Naive thymus-derived CD4-positive, alpha-beta T cell (primary cell): ENCODE measurements at regions of chr3 and their contacts with region 1.

Region 1: DNA sequence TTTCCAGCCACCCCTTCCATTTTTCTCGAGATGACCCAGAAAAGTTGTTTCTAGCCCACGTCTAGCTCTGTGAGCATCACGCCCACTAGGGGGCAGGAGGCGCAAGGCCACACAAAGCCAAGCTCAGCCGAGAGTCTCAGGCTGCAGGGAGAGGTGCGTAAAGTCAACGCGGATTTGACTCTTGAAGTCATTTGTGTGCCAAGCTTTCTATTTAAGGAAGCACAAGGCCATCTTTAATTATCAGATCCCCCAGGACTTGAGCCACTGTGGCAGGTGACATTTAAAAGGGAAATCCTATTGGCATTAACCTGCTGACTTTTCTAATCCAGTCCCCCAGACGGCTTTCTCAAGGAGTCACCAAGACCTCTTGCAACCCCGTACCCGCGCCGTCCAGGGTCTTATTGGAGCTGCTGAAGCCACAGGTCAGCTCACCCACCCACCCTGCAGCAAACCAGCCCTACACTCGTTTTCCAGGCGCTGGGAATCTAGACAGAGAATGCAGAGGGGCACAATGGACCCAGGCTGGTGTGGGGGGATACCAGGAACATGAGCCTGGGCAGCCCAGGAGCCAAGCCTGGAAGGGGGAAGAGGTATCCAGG is 62.1 kb downstream of the CAPN7 start:
- DNase-seq: peak; percentile 75 to 88 (median 82)
- ATAC-seq: peak; percentile 56
- H3K4me3 ChIP-seq: peak overlapping the region; percentile 4
- H3K4me3 Mint-ChIP-seq: peak overlapping the region in 9 of 10 donors; percentile 8 to 72 (median 56)
- H3K27ac ChIP-seq: no peak overlapping the region
- H3K27ac Mint-ChIP-seq: peak overlapping the region; percentile 32 to 84 (median 70)
- H3K4me1 ChIP-seq: peaks cover 54 to 69% of the 10 kb centered on the region in 2 donors
- H3K4me1 Mint-ChIP-seq: peaks cover 45 to 90% (median 73%) of the 10 kb centered on the region in 7 donors
- H3K27me3 ChIP-seq: no peaks in the 10 kb centered on the region
- H3K27me3 Mint-ChIP-seq: peaks cover 0 to 3% (median 0%) of the 10 kb centered on the region in 5 donors

Region 2: DNA sequence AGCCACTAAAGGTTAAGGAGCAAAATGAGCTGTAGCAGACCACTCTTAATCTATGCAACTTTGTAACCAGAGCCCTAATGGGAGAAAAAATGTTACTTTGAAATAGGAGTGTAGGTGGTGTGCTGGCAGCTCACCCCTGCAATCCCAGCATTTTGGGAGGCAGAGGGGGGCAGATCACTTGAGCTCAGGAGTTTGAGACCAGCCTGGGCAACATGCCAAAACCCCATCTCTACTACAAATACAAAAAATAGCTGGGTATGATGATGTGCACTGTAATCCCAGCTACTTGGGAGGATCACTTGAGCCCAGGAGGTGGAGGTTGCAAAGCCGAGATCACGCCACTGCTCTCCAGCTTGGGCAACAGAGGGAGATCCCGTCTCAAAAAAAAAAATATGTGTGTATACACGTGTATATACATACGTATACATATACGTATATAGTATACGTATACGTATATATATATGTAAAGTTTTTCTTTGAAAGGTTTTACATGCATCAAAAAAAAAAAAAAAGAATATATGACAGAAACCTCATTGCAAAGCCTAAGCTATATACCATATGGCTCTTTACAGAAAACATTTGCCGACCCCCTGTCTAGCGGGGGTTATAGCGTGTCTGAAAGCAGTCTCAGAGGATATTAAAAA is 46.4 kb before region 1 on chr3:
- CTCF ChIA-PET with region 1: no interaction called
- POLR2A ChIA-PET with region 1: no interaction called
- intact Hi-C with region 1: no loop called
- DNase-seq: no peak
- ATAC-seq: no peak
- H3K4me3 ChIP-seq: no peak overlapping the region
- H3K4me3 Mint-ChIP-seq: no peak overlapping the region
- H3K27ac ChIP-seq: no peak overlapping the region
- H3K27ac Mint-ChIP-seq: no peak overlapping the region
- H3K4me1 ChIP-seq: no peaks in the 10 kb centered on the region
- H3K4me1 Mint-ChIP-seq: peaks cover 10 to 29% (median 16%) of the 10 kb centered on the region in 7 donors
- H3K27me3 ChIP-seq: no peaks in the 10 kb centered on the region
- H3K27me3 Mint-ChIP-seq: no peaks in the 10 kb centered on the region

Region 3: GRCh38 chr3:15284121-15284889 is 16.2 kb after region 1 on chr3:
- CTCF ChIA-PET with region 1: interaction called, 12 read pairs
- POLR2A ChIA-PET with region 1: interaction called, 4 read pairs
- intact Hi-C with region 1: no loop called
- DNase-seq: no peak
- ATAC-seq: no peak
- H3K4me3 ChIP-seq: no peak overlapping the region
- H3K4me3 Mint-ChIP-seq: peak overlapping the region in 3 of 10 donors; percentile 3 to 42 (median 12)
- H3K27ac ChIP-seq: no peak overlapping the region
- H3K27ac Mint-ChIP-seq: peak overlapping the region in 4 of 9 donors; percentile 19 to 74 (median 38)
- H3K4me1 ChIP-seq: peaks cover 35 to 42% of the 10 kb centered on the region in 2 donors
- H3K4me1 Mint-ChIP-seq: peaks cover 48 to 97% (median 92%) of the 10 kb centered on the region in 7 donors
- H3K27me3 ChIP-seq: no peaks in the 10 kb centered on the region
- H3K27me3 Mint-ChIP-seq: no peaks in the 10 kb centered on the region

Region 4: DNA sequence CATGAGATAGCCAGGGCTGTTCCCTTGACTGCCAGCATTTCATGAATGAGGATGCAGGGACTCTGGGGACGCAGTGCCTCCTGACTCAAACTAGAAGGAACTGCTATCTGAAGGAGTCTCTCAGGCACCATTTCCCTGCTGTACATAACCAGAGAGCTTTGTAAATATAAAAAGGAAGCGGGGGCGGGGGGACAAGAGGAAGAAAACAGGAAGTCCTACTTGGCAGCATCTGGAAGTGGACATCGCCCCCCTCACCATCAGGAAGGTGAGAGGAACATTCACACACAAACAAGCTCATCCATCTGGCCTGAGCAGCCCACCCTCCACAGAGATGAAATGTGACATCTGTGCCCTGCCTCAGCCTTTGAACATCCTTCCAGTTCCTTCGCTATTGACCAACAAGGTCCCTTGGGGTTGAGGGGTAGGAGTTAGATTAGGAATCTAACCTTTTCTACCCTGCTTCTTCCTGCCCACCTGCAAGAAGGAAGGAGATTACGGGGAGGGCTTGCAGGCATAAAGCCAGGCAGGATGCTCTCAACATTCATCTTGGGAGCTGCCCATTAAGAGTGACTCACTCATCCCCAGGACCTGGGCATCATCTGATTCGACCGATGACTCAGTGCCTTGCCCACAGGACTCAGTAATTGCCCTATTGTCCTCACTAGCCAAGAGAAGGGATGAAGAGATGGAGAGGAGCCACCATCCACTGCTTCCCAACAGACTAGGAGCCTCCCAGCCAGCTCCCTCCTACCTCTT is 32.4 kb after region 1 on chr3:
- CTCF ChIA-PET with region 1: interaction called, 14 read pairs
- POLR2A ChIA-PET with region 1: no interaction called
- intact Hi-C with region 1: no loop called
- DNase-seq: no peak
- ATAC-seq: peak; percentile 83
- H3K4me3 ChIP-seq: no peak overlapping the region
- H3K4me3 Mint-ChIP-seq: peak overlapping the region; percentile 1 to 62 (median 50)
- H3K27ac ChIP-seq: no peak overlapping the region
- H3K27ac Mint-ChIP-seq: peak overlapping the region in 6 of 9 donors; percentile 5 to 65 (median 38)
- H3K4me1 ChIP-seq: peaks cover 47 to 73% of the 10 kb centered on the region in 2 donors
- H3K4me1 Mint-ChIP-seq: peaks cover 51 to 97% (median 78%) of the 10 kb centered on the region in 7 donors
- H3K27me3 ChIP-seq: no peaks in the 10 kb centered on the region
- H3K27me3 Mint-ChIP-seq: no peaks in the 10 kb centered on the region

Region 5: GRCh38 chr3:15319575-15319974 is 51.4 kb after region 1 on chr3:
- CTCF ChIA-PET with region 1: interaction called, 22 read pairs
- POLR2A ChIA-PET with region 1: interaction called, 15 read pairs
- intact Hi-C with region 1: no loop called
- DNase-seq: no peak
- ATAC-seq: no peak
- H3K4me3 ChIP-seq: no peak overlapping the region
- H3K4me3 Mint-ChIP-seq: peak overlapping the region in 6 of 10 donors; percentile 44 to 71 (median 66)
- H3K27ac ChIP-seq: no peak overlapping the region
- H3K27ac Mint-ChIP-seq: peak overlapping the region in 8 of 9 donors; percentile 33 to 90 (median 62)
- H3K4me1 ChIP-seq: peaks cover 46 to 64% of the 10 kb centered on the region in 2 donors
- H3K4me1 Mint-ChIP-seq: peaks cover 40 to 91% (median 77%) of the 10 kb centered on the region in 7 donors
- H3K27me3 ChIP-seq: no peaks in the 10 kb centered on the region
- H3K27me3 Mint-ChIP-seq: no peaks in the 10 kb centered on the region

Region 6: GRCh38 chr3:15356186-15356585 is 88.1 kb after region 1 on chr3:
- CTCF ChIA-PET with region 1: interaction called, 3 read pairs
- POLR2A ChIA-PET with region 1: interaction called, 7 read pairs
- intact Hi-C with region 1: loop called in 1 of 2 experiments (anchors 1 kb)
- DNase-seq: no peak
- ATAC-seq: no peak
- H3K4me3 ChIP-seq: peak overlapping the region; percentile 40
- H3K4me3 Mint-ChIP-seq: peak overlapping the region; percentile 67 to 88 (median 76)
- H3K27ac ChIP-seq: peak overlapping the region; percentile 67
- H3K27ac Mint-ChIP-seq: peak overlapping the region; percentile 87 to 99 (median 93)
- H3K4me1 ChIP-seq: peaks cover 19 to 36% of the 10 kb centered on the region in 2 donors
- H3K4me1 Mint-ChIP-seq: peaks cover 28 to 53% (median 45%) of the 10 kb centered on the region in 7 donors
- H3K27me3 ChIP-seq: no peaks in the 10 kb centered on the region
- H3K27me3 Mint-ChIP-seq: no peaks in the 10 kb centered on the region

Region 7: GRCh38 chr3:15557511-15557946 is 289.4 kb after region 1 on chr3:
- CTCF ChIA-PET with region 1: no interaction called
- POLR2A ChIA-PET with region 1: no interaction called
- intact Hi-C with region 1: loop called (anchors 1 kb)
- DNase-seq: peak; percentile 13 to 73 (median 62)
- ATAC-seq: peak; percentile 92
- H3K4me3 ChIP-seq: no peak overlapping the region
- H3K4me3 Mint-ChIP-seq: peak overlapping the region in 1 of 10 donors; percentile 0
- H3K27ac ChIP-seq: no peak overlapping the region
- H3K27ac Mint-ChIP-seq: peak overlapping the region in 2 of 9 donors; percentile 19 to 64
- H3K4me1 ChIP-seq: peaks cover 0 to 15% of the 10 kb centered on the region in 2 donors
- H3K4me1 Mint-ChIP-seq: peaks cover 0 to 35% (median 11%) of the 10 kb centered on the region in 7 donors
- H3K27me3 ChIP-seq: no peaks in the 10 kb centered on the region
- H3K27me3 Mint-ChIP-seq: no peaks in the 10 kb centered on the region

Region 8: GRCh38 chr3:15846606-15847005 is 578.5 kb after region 1 on chr3:
- CTCF ChIA-PET with region 1: no interaction called
- POLR2A ChIA-PET with region 1: no interaction called
- intact Hi-C with region 1: no loop called
- DNase-seq: no peak
- ATAC-seq: no peak
- H3K4me3 ChIP-seq: no peak overlapping the region
- H3K4me3 Mint-ChIP-seq: no peak overlapping the region
- H3K27ac ChIP-seq: no peak overlapping the region
- H3K27ac Mint-ChIP-seq: no peak overlapping the region
- H3K4me1 ChIP-seq: no peaks in the 10 kb centered on the region
- H3K4me1 Mint-ChIP-seq: peaks cover 11 to 67% (median 52%) of the 10 kb centered on the region in 7 donors
- H3K27me3 ChIP-seq: no peaks in the 10 kb centered on the region
- H3K27me3 Mint-ChIP-seq: no peaks in the 10 kb centered on the region